ENCODE measurements at regions of chr2 and their contacts with region 1.

Region 1: GRCh38 chr2:226649871-226650660 is 149.6 kb downstream of the IRS1 start:
- DNase-seq: no peak

Region 2: GRCh38 chr2:226678422-226678821 is 28.4 kb after region 1 on chr2:
- intact Hi-C with region 1: loop called in 1 of 2 experiments (anchors 1 kb)
- DNase-seq: no peak

Measured in posterior vena cava (tissue), 2 donors.